IMR-90 (cell line): ENCODE measurements at regions of chr17 and their contacts with region 1.

Region 1: DNA sequence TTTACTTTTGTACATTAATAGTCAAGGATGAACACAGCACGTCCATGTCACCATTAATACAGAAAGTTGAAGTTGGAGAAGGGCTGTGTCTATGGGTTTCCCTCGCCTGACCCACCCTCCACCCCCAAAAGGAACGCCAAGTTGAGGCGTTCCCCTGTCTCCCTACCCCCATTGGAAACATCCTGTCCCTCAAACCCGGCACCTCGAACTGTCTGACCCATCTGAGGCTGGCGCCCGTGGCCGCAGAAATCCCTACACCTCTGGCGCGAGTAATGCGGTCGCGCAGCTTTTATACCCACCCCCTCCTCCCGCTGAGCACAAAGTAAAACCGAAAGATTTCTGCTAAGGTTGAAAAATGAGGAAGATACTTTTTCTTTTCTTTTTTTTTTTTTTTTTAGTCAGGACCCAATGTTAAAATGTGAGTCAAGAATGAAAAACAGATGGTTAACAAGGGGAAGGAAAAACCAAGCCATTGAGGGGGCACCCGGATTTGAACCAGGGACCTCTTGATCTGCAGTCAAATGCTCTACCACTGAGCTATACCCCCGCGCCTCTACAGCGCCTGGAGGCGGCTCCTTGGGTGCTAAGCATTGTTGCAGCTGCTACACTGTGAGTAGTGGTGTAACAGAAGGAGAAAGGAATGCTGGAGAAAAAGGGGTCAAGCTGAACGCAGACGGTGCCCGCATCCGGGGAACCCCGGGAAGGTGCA is 887 bp upstream of the LASP1 start:
- DNase-seq: peak; percentile 88
- ATAC-seq: peak; percentile 27
- H3K4me3 ChIP-seq: peak overlapping the region; percentile 90
- H3K27ac ChIP-seq: peak overlapping the region; percentile 90
- H3K4me1 ChIP-seq: peaks cover 24% of the 10 kb centered on the region
- H3K27me3 ChIP-seq: no peaks in the 10 kb centered on the region
- CTCF ChIP-seq: peak; percentile 42
- POLR2A ChIP-seq: no peak; the same call in none of the 2 replicates
- RAD21 ChIP-seq: no peak

Region 2: GRCh38 chr17:38719943-38720641 is 148.9 kb before region 1 on chr17:
- CTCF ChIA-PET with region 1: no interaction called
- POLR2A ChIA-PET with region 1: no interaction called
- dilution Hi-C with region 1: no loop called
- in situ Hi-C with region 1: no loop called
- intact Hi-C with region 1: no loop called
- DNase-seq: no peak
- ATAC-seq: no peak
- H3K4me3 ChIP-seq: no peak overlapping the region
- H3K27ac ChIP-seq: no peak overlapping the region
- H3K4me1 ChIP-seq: no peaks in the 10 kb centered on the region; the same call in 1 of the 2 replicates
- H3K27me3 ChIP-seq: no peaks in the 10 kb centered on the region
- CTCF ChIP-seq: no peak
- POLR2A ChIP-seq: no peak
- RAD21 ChIP-seq: no peak

Region 3: GRCh38 chr17:38752119-38752929 is 116.6 kb before region 1 on chr17 and contains the start of gene PSMB3:
- CTCF ChIA-PET with region 1: no interaction called
- POLR2A ChIA-PET with region 1: no interaction called
- dilution Hi-C with region 1: no loop called
- in situ Hi-C with region 1: no loop called
- intact Hi-C with region 1: loop called (anchors 5 kb)
- DNase-seq: peak; percentile 100
- ATAC-seq: peak; percentile 80
- H3K4me3 ChIP-seq: peak within 1 kb of the TSS; percentile 84
- H3K27ac ChIP-seq: peak within 1 kb of the TSS; percentile 90
- H3K4me1 ChIP-seq: peaks cover 1% of the 10 kb centered on the region; the same call in 1 of the 2 replicates
- H3K27me3 ChIP-seq: no peaks in the 10 kb centered on the region
- CTCF ChIP-seq: no peak
- POLR2A ChIP-seq: peak; percentile 35; the same call in 1 of the 2 replicates
- RAD21 ChIP-seq: no peak
- total RNA-seq, gene PSMB3: 510 and 828 TPM in 2 replicates

Region 4: DNA sequence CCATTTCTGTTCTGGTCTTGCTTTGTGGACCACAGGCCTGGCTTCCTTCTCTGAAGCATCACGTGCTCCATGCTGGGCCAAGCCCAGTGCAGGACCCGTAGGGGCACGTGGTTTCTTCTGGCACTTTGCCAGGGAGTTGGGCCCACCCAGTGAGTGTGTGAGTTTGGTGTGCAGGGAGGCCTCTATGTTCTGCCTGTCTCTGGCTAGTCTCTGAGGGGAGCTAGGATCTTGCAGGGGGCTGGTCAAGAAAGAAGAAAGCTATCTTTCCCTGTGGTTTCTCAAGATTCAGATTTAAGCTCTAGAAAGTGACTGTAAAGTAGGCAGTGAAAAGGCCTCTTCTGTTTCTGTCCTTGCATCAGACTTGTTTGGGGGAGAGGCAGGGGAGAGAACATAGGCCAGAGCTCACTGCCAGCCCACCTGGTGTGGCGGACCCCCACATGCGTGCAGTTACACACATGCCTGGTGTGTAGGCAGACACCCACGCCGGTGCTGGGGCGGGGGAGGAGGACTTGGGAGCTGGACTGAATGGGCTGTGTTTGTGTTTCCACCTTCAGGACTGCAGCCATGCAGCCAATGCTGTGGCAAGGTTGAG is 12.7 kb after region 1 on chr17:
- CTCF ChIA-PET with region 1: no interaction called
- POLR2A ChIA-PET with region 1: interaction called, 5 read pairs
- dilution Hi-C with region 1: no loop called
- in situ Hi-C with region 1: no loop called
- intact Hi-C with region 1: loop called (anchors 2 kb)
- DNase-seq: peak; percentile 48
- ATAC-seq: peak; percentile 2; the same call in 1 of the 2 replicates
- H3K4me3 ChIP-seq: no peak overlapping the region
- H3K27ac ChIP-seq: peak overlapping the region; percentile 74
- H3K4me1 ChIP-seq: peaks cover 66% of the 10 kb centered on the region
- H3K27me3 ChIP-seq: no peaks in the 10 kb centered on the region
- CTCF ChIP-seq: no peak
- POLR2A ChIP-seq: no peak
- RAD21 ChIP-seq: no peak